ENCODE measurements at regions of chr22 and their contacts with region 1.

Region 1: GRCh38 chr22:36470162-36470993 is 11.1 kb downstream of the TXN2 start:
- DNase-seq: peak; percentile 76 to 83 (median 82)
- ATAC-seq: peak; percentile 79 to 88 (median 86)
- H3K4me3 ChIP-seq: no peak overlapping the region
- H3K27ac ChIP-seq: peak overlapping the region in 1 of 3 donors; percentile 33
- H3K4me1 ChIP-seq: peaks cover 0 to 8% (median 0%) of the 10 kb centered on the region in 4 donors
- H3K27me3 ChIP-seq: no peaks in the 10 kb centered on the region
- CTCF ChIP-seq: peak; percentile 92 to 98 (median 98)
- POLR2A ChIP-seq: no peak

Region 2: GRCh38 chr22:36294801-36295200 is 175.6 kb before region 1 on chr22:
- intact Hi-C with region 1: loop called in 1 of 2 experiments (anchors 5 kb)
- DNase-seq: peak in 1 of 3 donors; percentile 49
- ATAC-seq: no peak
- H3K4me3 ChIP-seq: no peak overlapping the region
- H3K27ac ChIP-seq: no peak overlapping the region
- H3K4me1 ChIP-seq: peaks cover 0 to 14% (median 5%) of the 10 kb centered on the region in 4 donors
- H3K27me3 ChIP-seq: no peaks in the 10 kb centered on the region
- CTCF ChIP-seq: no peak
- POLR2A ChIP-seq: no peak

Region 3: GRCh38 chr22:36301384-36301828 is 169.0 kb before region 1 on chr22:
- intact Hi-C with region 1: loop called (anchors 5 kb)
- DNase-seq: peak; percentile 72 to 79 (median 75)
- ATAC-seq: peak; percentile 55 to 79 (median 70)
- H3K4me3 ChIP-seq: no peak overlapping the region
- H3K27ac ChIP-seq: peak overlapping the region in 1 of 3 donors; percentile 5
- H3K4me1 ChIP-seq: peaks cover 0 to 20% (median 6%) of the 10 kb centered on the region in 4 donors
- H3K27me3 ChIP-seq: no peaks in the 10 kb centered on the region
- CTCF ChIP-seq: peak; percentile 89 to 98 (median 94)
- POLR2A ChIP-seq: no peak

Region 4: DNA sequence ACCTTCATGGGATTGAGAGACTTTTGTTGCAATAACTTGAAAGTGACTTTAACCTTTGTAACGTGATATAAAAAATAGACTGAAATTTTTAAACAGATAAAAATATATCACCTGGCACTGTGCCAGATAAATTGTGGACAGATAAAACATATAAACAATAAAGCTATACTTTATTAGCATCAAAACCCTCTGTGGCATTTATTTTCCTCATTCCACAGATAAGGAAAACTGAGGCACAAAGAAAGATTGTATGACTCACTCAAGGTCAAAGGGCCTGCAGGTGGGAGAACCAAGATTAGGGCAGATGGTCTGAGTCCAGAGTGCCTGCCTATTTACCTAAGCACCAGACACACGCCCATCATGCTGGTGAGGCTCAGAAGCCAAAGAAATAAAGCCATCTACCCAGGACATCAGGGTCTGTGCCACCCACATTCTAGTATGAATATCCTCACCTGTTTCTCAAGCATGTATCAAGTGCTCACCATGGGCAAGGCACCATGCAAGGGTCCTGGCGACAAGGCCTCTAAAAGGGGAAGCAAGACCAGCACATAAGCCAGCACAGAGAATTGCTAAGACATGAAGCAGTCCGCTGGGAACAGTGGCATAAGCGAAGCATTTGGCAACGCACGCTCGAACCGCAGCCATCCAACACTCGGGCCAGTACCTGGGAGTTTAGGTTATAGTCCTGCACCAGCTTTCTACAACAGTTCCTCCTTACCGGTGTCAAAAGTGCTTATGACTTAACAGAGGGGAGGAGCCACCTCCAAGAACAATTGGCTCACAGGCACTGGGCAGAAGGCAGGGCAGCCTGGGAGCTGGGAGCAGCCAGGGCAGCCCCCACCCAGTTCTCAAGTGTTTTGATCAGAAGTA is 100.2 kb before region 1 on chr22:
- intact Hi-C with region 1: loop called in 1 of 2 experiments (anchors 10 kb)
- DNase-seq: no peak
- ATAC-seq: peak; percentile 48 to 61 (median 57)
- H3K4me3 ChIP-seq: no peak overlapping the region
- H3K27ac ChIP-seq: peak overlapping the region; percentile 52 to 76 (median 61)
- H3K4me1 ChIP-seq: peaks cover 0 to 97% (median 47%) of the 10 kb centered on the region in 4 donors
- H3K27me3 ChIP-seq: no peaks in the 10 kb centered on the region
- CTCF ChIP-seq: no peak
- POLR2A ChIP-seq: no peak

Region 5: GRCh38 chr22:36387752-36388518 is 82.4 kb before region 1 on chr22 and contains the start of gene MYH9:
- intact Hi-C with region 1: loop called in 1 of 2 experiments (anchors 2 kb)
- DNase-seq: peak; percentile 100
- ATAC-seq: peak; percentile 84 to 95 (median 88)
- H3K4me3 ChIP-seq: peak within 1 kb of the TSS; percentile 80 to 94 (median 87)
- H3K27ac ChIP-seq: peak within 1 kb of the TSS; percentile 98 to 99 (median 99)
- H3K4me1 ChIP-seq: peaks cover 0 to 28% (median 15%) of the 10 kb centered on the region in 4 donors
- H3K27me3 ChIP-seq: no peaks in the 10 kb centered on the region
- CTCF ChIP-seq: no peak
- POLR2A ChIP-seq: peak; percentile 99
- total RNA-seq, gene MYH9: 168 to 435 (median 222) TPM

Region 6: GRCh38 chr22:36409911-36410756 is 60.2 kb before region 1 on chr22:
- intact Hi-C with region 1: no loop called
- DNase-seq: peak; percentile 94 to 96 (median 96)
- ATAC-seq: peak; percentile 94 to 99 (median 98)
- H3K4me3 ChIP-seq: peak overlapping the region; percentile 29 to 53 (median 51)
- H3K27ac ChIP-seq: peak overlapping the region; percentile 76 to 77 (median 77)
- H3K4me1 ChIP-seq: peaks cover 0 to 16% (median 0%) of the 10 kb centered on the region in 4 donors
- H3K27me3 ChIP-seq: no peaks in the 10 kb centered on the region
- CTCF ChIP-seq: peak in 1 of 4 donors; percentile 27
- POLR2A ChIP-seq: peak; percentile 88

Measured in right lobe of liver (tissue), 6 donors.